Caco-2 (cell line): ENCODE measurements at regions of chr11 and their contacts with region 1.

Region 1: DNA sequence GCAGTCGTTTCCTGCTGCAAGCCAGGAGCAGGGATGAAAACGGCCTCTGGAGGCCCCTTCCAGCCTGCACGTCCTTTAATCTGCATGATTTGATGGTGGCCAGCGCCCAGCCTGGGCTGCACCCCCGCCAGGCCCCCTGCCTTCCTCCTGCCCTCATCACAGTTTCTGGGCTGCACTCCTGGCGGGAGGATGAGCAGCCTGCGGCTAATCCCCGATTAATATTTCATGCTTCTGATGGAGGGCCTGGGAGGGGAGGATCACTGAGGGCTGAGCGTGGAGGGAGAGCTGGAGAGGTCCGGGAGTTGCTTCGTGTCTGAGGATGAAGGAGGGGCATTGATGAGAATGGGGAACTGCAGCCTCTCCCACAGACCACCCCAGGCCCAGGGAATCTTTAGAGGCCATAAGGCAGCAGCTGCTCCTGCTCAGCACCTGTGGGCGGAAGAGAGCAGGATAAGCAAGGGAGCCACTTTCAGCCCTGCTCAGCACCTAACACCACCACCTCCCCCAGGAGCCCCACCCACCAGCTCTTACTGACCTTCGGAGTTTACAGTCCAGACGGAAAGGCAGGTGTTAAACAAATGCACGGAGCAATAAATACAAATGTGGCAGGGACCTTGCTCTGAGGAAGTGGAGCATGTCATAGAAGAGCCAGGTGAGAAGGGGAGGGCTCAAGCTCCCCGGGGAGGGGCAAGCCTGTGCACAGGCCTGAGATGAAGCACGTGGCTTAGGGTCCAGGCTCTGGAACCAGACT is 135.0 kb upstream of the NECTIN1 start:
- DNase-seq: peak; percentile 92 to 97
- H3K4me3 ChIP-seq: no peak overlapping the region
- H3K4me3 Mint-ChIP-seq: peak overlapping the region; percentile 27
- H3K27ac Mint-ChIP-seq: peak overlapping the region; percentile 61
- H3K4me1 ChIP-seq: peaks cover 19% of the 10 kb centered on the region
- H3K4me1 Mint-ChIP-seq: peaks cover 20% of the 10 kb centered on the region
- H3K27me3 ChIP-seq: no peaks in the 10 kb centered on the region
- H3K27me3 Mint-ChIP-seq: no peaks in the 10 kb centered on the region
- CTCF ChIP-seq: peak in 1 of 2 experiments; percentile 84

Region 2: DNA sequence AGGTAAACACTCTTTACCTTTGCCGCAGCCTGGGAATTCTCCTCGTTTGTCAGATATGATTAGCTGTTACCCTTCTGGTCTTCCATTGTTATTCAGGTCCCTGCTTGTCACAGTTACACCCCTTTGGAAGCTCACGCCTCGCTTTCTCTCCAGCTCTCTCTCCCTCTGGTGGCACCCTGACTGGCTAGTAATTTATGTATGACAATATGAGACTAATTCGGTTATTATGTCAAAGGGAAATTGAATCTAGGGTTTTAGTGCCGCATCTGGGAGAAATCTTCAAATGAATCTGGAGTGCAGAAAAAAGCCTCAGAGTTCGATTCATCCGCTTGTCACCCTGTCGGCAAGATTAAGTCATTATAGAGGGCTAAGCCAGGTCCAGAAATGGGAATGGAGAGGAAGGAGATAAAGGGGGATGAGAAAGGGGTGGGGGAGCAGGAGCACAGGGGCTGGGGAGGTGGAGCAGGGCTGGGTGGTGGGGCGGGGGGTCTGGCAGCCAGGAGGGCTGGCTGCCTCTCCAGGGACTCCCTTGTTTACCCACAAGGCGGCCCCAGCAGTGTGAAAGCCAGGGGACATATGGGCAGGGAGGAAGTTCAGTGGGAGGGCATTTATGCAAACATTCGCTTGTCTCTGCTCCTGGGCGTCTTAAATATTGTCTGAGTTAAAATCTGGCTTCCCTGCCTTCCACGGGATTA is 44.0 kb after region 1 on chr11:
- CTCF ChIA-PET with region 1: interaction called, 9 read pairs
- POLR2A ChIA-PET with region 1: interaction called, 5 read pairs
- intact Hi-C with region 1: loop called (anchors 1 kb)
- DNase-seq: no peak
- H3K4me3 ChIP-seq: no peak overlapping the region
- H3K4me3 Mint-ChIP-seq: peak overlapping the region; percentile 64
- H3K27ac Mint-ChIP-seq: peak overlapping the region; percentile 86
- H3K4me1 ChIP-seq: peaks cover 70% of the 10 kb centered on the region
- H3K4me1 Mint-ChIP-seq: peaks cover 79% of the 10 kb centered on the region
- H3K27me3 ChIP-seq: no peaks in the 10 kb centered on the region
- H3K27me3 Mint-ChIP-seq: no peaks in the 10 kb centered on the region
- CTCF ChIP-seq: peak in 1 of 2 experiments; percentile 11

Region 3: DNA sequence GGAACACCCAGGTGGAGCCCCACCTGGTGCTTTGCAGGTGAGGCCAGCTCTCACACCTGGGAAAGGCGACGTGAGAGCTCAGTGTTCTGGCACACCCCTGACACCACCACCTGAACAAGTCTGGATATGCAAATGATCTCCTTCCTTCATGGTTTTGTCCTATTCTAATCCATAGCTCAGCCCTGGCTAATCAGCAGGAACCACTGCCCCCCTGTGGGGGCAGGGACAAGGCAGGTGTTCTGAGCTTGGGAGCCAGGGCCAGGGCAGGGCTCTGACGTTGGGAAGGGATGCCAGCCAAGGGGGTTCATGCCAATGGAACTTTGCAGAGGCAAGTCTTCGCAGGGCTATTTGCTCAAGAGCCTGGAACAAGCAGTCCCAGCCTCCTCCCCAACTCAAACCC is 129.7 kb after region 1 on chr11:
- CTCF ChIA-PET with region 1: interaction called, 16 read pairs
- POLR2A ChIA-PET with region 1: no interaction called
- intact Hi-C with region 1: loop called (anchors 1 kb)
- DNase-seq: peak in 1 of 2 experiments; percentile 69
- H3K4me3 ChIP-seq: no peak overlapping the region
- H3K4me3 Mint-ChIP-seq: no peak overlapping the region
- H3K27ac Mint-ChIP-seq: no peak overlapping the region
- H3K4me1 ChIP-seq: 0 out of 2 replicates have a peak, but pooled peaks cover 8% of the 10 kb centered on the region
- H3K4me1 Mint-ChIP-seq: no peaks in the 10 kb centered on the region
- H3K27me3 ChIP-seq: no peaks in the 10 kb centered on the region
- H3K27me3 Mint-ChIP-seq: no peaks in the 10 kb centered on the region
- CTCF ChIP-seq: peak; percentile 33 to 82

Region 4: DNA sequence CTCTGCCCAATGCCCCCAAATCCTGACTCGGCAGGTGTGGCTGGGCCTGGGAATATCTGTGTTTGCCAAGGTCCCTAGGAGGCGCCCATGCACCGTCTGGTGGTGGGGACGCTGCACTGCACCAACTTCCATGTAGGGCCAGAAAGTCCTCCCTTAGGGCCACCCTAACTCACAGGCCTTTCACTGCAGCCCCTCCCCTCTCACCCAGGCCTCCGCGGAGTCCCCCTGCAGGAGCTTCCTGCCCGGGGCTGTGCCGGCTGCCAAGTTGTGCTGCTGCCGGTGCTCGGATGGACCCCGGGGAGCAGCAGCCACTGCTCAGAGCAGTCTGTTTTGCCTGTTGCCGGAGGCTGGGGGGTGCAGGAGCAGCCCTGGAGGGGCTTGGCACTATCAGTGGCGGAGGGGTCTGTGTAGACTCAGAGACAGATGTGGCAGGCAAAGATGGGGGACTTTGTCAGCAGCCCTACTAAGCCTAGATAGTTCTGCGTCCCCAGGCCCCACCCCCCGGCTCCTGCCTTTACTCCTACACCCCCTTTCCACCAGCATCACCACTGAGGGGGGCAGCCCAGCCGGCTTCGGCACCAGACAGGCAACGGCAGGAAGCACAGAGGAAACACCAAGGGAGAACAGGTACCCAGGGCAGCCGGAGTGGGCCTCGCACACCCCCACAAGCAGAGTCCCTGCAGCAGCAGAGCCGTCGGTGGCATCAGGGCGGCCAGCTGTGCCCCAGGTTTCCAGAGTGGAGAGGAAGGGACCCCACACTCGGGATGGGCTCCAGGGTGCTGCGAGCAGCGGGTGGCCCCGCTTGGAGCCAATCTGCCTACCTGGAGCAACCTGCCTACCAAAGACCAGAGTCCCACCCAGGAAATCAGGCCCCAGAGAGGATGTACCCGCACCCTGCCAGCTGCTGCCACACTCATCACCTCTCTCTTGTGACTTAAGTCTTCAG is 149.6 kb after region 1 on chr11:
- CTCF ChIA-PET with region 1: no interaction called
- POLR2A ChIA-PET with region 1: no interaction called
- intact Hi-C with region 1: loop called (anchors 1 kb)
- DNase-seq: peak; percentile 72 to 74
- H3K4me3 ChIP-seq: no peak overlapping the region
- H3K4me3 Mint-ChIP-seq: no peak overlapping the region
- H3K27ac Mint-ChIP-seq: no peak overlapping the region
- H3K4me1 ChIP-seq: peaks cover 7% of the 10 kb centered on the region
- H3K4me1 Mint-ChIP-seq: peaks cover 12% of the 10 kb centered on the region
- H3K27me3 ChIP-seq: peaks cover 3% of the 10 kb centered on the region
- H3K27me3 Mint-ChIP-seq: peaks cover 21% of the 10 kb centered on the region
- CTCF ChIP-seq: peak; percentile 89 to 96